Activated CD4-positive, alpha-beta memory T cell treated with anti-CD3 and anti-CD28 coated beads for 36 hours (primary cell): ENCODE measurements at regions of chr5 and their contacts with region 1.

Region 1: DNA sequence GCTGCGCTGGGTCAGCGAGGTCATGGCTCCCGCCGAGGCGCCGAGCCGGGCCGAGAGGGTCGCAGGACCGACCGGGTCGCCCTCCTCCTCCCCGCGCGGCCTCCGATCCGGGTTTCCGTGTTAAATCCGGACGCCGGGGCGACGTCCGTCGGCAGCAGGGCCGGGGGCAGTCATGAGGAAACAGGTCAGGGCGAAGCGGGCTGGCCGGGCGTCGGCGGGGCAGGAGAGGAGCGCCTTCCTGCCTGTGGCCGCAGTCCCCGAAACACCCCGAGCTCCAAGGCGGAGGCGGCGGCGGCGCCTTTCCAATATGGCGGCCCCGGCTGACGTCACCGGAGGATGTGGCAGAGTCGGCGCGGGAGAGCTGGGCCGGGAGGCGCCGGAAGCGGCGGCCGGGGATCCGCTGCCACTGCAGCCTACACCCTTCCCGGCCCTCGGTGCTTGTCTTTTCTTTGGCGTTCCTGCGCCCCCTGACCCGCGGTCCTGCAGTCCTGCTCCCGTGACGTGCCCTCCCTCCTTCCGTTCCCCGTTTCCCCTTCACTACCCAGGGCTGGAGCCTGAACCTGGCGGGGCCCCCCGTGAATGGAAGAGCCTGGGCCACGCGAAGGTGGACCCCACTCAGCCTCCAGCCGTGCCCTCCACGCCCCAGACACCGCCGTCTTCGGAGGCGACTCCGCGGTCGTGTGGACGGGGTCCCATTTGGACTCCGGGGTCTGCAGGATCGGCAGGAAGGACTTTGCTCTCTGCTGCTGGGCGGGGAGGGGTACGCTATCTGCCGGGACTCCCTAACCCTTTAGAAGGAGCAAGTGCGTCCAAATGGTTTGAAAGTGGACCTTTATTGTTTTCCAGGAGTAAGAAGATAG is at the start of gene GOLPH3:
- DNase-seq: peak; percentile 96
- H3K4me3 Mint-ChIP-seq: peak within 1 kb of the TSS; percentile 99
- H3K27ac Mint-ChIP-seq: peak within 1 kb of the TSS; percentile 98
- H3K4me1 Mint-ChIP-seq: peaks cover 34% of the 10 kb centered on the region
- H3K27me3 Mint-ChIP-seq: peaks cover 4% of the 10 kb centered on the region
- total RNA-seq, gene GOLPH3: 65.6 to 67.1 TPM

Region 2: GRCh38 chr5:31531888-31532710 is 642.1 kb before region 1 on chr5 and contains the starts of genes C5orf22 and DROSHA:
- CTCF ChIA-PET with region 1: no interaction called
- POLR2A ChIA-PET with region 1: no interaction called
- intact Hi-C with region 1: loop called (anchors 5 kb)
- DNase-seq: peak; percentile 96
- H3K4me3 Mint-ChIP-seq: peak within 1 kb of the TSS; percentile 94
- H3K27ac Mint-ChIP-seq: peak within 1 kb of the TSS; percentile 92
- H3K4me1 Mint-ChIP-seq: peaks cover 48% of the 10 kb centered on the region
- H3K27me3 Mint-ChIP-seq: no peaks in the 10 kb centered on the region
- total RNA-seq, gene C5orf22: 25.1 to 29.0 TPM
- total RNA-seq, gene DROSHA: 59.6 to 66.1 TPM

Region 3: GRCh38 chr5:32138839-32139493 is 35.3 kb before region 1 on chr5:
- CTCF ChIA-PET with region 1: no interaction called
- POLR2A ChIA-PET with region 1: interaction called, 5 read pairs
- intact Hi-C with region 1: loop called (anchors 1 kb)
- DNase-seq: peak; percentile 92
- H3K4me3 Mint-ChIP-seq: peak overlapping the region; percentile 28
- H3K27ac Mint-ChIP-seq: peak overlapping the region; percentile 88
- H3K4me1 Mint-ChIP-seq: peaks cover 25% of the 10 kb centered on the region
- H3K27me3 Mint-ChIP-seq: no peaks in the 10 kb centered on the region

Region 4: DNA sequence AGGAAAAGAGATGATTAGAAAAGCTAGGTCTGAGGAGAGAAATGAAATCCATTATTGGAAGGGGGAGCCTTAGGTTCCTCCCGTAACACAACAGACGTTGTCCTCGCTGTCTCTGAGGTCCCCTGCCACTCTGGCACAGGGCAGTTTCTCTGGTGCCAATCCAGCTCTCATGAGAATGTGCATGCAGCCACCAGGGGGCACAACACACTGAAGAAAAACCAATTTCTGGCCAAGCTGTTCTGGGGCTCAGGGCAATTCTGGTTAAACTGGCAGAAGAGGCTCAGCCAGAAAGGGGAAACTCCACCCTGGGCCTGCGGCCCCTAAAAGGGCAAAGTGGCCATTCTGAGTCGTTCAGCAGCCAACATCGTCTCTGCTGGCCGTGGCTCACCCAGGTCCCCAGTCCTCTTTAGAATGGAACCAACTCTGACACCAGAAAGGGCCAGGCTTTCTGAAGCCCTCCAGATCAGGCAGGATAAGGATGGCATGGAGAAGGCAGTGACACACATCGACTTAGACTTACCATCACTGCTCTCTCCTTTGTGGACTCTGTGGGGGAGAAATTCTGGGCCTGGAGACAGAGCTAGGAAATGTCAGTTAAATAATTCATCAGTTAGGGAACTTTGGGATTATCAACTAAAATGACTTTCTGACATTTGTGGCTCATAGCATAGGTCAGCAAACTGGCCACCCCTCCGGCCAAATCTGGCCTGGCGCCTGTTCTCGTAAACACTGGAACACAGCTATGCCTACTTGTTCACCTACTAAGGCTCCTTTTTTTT is 58.4 kb after region 1 on chr5:
- CTCF ChIA-PET with region 1: interaction called, 24 read pairs
- POLR2A ChIA-PET with region 1: no interaction called
- intact Hi-C with region 1: no loop called
- DNase-seq: peak; percentile 85
- H3K4me3 Mint-ChIP-seq: no peak overlapping the region
- H3K27ac Mint-ChIP-seq: no peak overlapping the region
- H3K4me1 Mint-ChIP-seq: no peaks in the 10 kb centered on the region
- H3K27me3 Mint-ChIP-seq: no peaks in the 10 kb centered on the region

Region 5: DNA sequence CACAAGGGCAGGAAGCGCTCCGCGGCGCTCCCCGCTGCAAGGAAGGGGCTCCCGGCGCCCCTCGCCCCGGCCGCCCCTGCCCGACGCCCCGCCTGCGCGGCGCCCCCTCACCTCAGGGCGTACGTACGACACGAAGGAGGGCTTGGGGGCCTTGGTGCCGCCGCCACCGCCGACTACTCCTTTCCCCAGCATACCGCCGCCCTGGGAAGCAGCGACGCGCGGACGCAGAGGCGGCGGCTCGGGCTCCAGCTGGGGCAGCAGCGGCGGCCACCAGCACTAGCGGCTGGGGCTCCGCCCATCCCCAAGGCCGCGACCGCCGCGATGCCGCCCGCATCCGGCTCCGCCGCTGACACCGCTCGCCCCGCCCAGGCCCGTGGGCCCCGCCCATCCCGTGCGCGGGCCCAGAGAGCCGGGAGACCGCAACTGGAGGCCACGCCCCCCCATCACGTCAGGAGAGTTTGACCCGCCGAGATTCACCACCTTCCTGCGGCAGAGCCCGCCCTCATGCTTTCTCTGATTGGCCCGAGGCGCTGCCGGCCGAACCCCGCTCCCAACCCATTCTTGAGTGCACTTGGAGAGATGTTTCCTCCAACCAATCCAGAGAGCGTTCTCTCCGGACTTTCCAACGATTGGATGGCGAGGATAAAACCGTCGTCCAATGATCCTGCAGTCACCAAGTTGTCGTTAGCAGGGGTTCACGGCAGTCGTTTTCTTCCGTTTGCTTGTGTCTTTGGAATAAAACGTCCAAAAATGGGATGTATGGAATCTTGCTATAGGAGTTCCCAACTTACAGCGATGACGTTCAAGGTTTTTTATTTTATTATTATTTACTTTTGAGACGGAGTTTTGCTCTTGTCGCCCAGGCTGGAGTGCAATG is 138.6 kb after region 1 on chr5 and contains the start of gene MTMR12:
- CTCF ChIA-PET with region 1: no interaction called
- POLR2A ChIA-PET with region 1: no interaction called
- intact Hi-C with region 1: loop called (anchors 1 kb)
- DNase-seq: peak; percentile 100
- H3K4me3 Mint-ChIP-seq: peak within 1 kb of the TSS; percentile 86
- H3K27ac Mint-ChIP-seq: peak within 1 kb of the TSS; percentile 85
- H3K4me1 Mint-ChIP-seq: peaks cover 22% of the 10 kb centered on the region
- H3K27me3 Mint-ChIP-seq: no peaks in the 10 kb centered on the region
- total RNA-seq, gene MTMR12: 22.3 to 22.4 TPM